Gastrocnemius medialis (tissue), 4 donors: ENCODE measurements at regions of chr2 and their contacts with region 1.

Region 1: GRCh38 chr2:207746131-207746530 is 23.6 kb downstream of the FZD5 start:
- DNase-seq: peak; percentile 15 to 25
- ATAC-seq: peak in 1 of 2 donors; percentile 75
- H3K4me3 ChIP-seq: no peak overlapping the region
- H3K27ac ChIP-seq: no peak overlapping the region
- H3K4me1 ChIP-seq: no peaks in the 10 kb centered on the region
- H3K27me3 ChIP-seq: no peaks in the 10 kb centered on the region
- CTCF ChIP-seq: peak; percentile 65 to 85 (median 80)
- POLR2A ChIP-seq: no peak

Region 2: GRCh38 chr2:207974216-207974605 is 228.1 kb after region 1 on chr2:
- in situ Hi-C with region 1: no loop called
- intact Hi-C with region 1: loop called (anchors 5 kb)
- DNase-seq: no peak
- ATAC-seq: no peak
- H3K4me3 ChIP-seq: no peak overlapping the region
- H3K27ac ChIP-seq: no peak overlapping the region
- H3K4me1 ChIP-seq: peaks cover 5 to 9% of the 10 kb centered on the region in 2 donors
- H3K27me3 ChIP-seq: no peaks in the 10 kb centered on the region
- CTCF ChIP-seq: no peak
- POLR2A ChIP-seq: no peak

Region 3: GRCh38 chr2:208033758-208034502 is 287.8 kb after region 1 on chr2:
- in situ Hi-C with region 1: loop called in 3 of 4 experiments (anchors 10 kb)
- intact Hi-C with region 1: no loop called
- DNase-seq: peak in 1 of 2 donors; percentile 15
- ATAC-seq: peak in 1 of 2 donors; percentile 44
- H3K4me3 ChIP-seq: no peak overlapping the region
- H3K27ac ChIP-seq: no peak overlapping the region
- H3K4me1 ChIP-seq: no peaks in the 10 kb centered on the region
- H3K27me3 ChIP-seq: no peaks in the 10 kb centered on the region
- CTCF ChIP-seq: no peak
- POLR2A ChIP-seq: no peak

Region 4: GRCh38 chr2:208040199-208041171 is 294.4 kb after region 1 on chr2:
- in situ Hi-C with region 1: loop called in 3 of 4 experiments (anchors 10 kb)
- intact Hi-C with region 1: loop called (anchors 2 kb)
- DNase-seq: peak; percentile 8 to 48
- ATAC-seq: peak in 1 of 2 donors; percentile 82
- H3K4me3 ChIP-seq: no peak overlapping the region
- H3K27ac ChIP-seq: no peak overlapping the region
- H3K4me1 ChIP-seq: no peaks in the 10 kb centered on the region
- H3K27me3 ChIP-seq: no peaks in the 10 kb centered on the region
- CTCF ChIP-seq: peak; percentile 34 to 73 (median 63)
- POLR2A ChIP-seq: no peak

Region 5: GRCh38 chr2:208062113-208062512 is 316.0 kb after region 1 on chr2:
- in situ Hi-C with region 1: loop called (anchors 10 kb)
- intact Hi-C with region 1: no loop called
- DNase-seq: no peak
- ATAC-seq: peak in 1 of 2 donors; percentile 53
- H3K4me3 ChIP-seq: no peak overlapping the region
- H3K27ac ChIP-seq: no peak overlapping the region
- H3K4me1 ChIP-seq: no peaks in the 10 kb centered on the region
- H3K27me3 ChIP-seq: no peaks in the 10 kb centered on the region
- CTCF ChIP-seq: peak in 2 of 5 experiments; percentile 14 to 18
- POLR2A ChIP-seq: no peak

Region 6: GRCh38 chr2:208072250-208072892 is 326.2 kb after region 1 on chr2:
- in situ Hi-C with region 1: loop called (anchors 10 kb)
- intact Hi-C with region 1: loop called (anchors 1 kb)
- DNase-seq: peak in 1 of 2 donors; percentile 41
- ATAC-seq: peak; percentile 63 to 85
- H3K4me3 ChIP-seq: no peak overlapping the region
- H3K27ac ChIP-seq: no peak overlapping the region
- H3K4me1 ChIP-seq: no peaks in the 10 kb centered on the region
- H3K27me3 ChIP-seq: no peaks in the 10 kb centered on the region
- CTCF ChIP-seq: peak; percentile 49 to 81 (median 66)
- POLR2A ChIP-seq: no peak